ENCODE measurements at regions of chr14 and their contacts with region 1.

Region 1: DNA sequence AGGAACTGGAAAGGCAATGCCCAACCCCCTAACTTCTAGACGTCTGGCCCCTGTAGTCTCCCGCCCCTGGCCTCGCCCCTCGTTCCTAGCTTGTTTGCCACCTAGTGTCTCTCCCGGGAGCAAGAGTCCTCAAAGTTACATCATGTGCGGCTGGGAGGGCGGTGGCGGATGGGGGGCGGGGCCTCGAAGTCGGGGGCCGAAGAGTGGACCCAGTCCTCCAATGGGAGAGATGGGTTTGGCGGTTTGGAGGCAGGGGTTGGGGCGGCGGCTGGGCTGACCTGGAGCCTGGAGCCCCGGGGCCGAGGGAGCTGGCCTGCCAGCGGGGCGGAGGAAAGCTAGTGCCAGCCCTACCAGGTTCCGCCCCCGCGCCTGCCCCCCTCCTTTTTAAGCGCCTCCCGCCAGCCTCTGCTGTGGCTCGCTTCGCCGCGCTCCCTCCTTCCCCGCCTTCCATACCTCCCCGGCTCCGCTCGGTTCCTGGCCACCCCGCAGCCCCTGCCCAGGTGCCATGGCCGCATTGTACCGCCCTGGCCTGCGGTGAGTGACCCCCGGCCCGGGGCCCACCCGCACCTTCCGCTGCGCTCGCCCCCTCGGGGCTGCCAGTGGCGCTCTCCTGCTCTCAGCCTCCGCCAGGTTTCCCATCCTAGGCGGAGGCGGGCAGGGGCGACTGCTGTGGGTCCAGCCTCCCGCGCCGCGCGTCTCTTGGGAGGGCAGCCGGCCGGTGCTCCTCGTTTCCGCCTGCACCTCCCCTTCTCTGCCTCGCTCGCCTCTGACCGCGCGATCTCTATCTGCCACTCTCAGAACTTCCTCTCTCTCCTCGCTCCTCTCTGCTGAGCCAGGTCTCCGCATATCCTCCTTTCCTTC is at the start of gene PCK2:
- DNase-seq: peak; percentile 81
- ATAC-seq: peak; percentile 66
- H3K4me3 ChIP-seq: peak within 1 kb of the TSS; percentile 62 to 97 (median 89)
- H3K4me3 Mint-ChIP-seq: peak within 1 kb of the TSS; percentile 95
- H3K27ac ChIP-seq: peak within 1 kb of the TSS; percentile 80 to 95
- H3K27ac Mint-ChIP-seq: peak within 1 kb of the TSS; percentile 92
- H3K4me1 ChIP-seq: peaks cover 5 to 35% of the 10 kb centered on the region in 2 donors
- H3K4me1 Mint-ChIP-seq: peaks cover 38% of the 10 kb centered on the region
- H3K27me3 ChIP-seq: no peaks in the 10 kb centered on the region
- H3K27me3 Mint-ChIP-seq: no peaks in the 10 kb centered on the region
- CTCF ChIP-seq: peak; percentile 28
- total RNA-seq, gene PCK2: 34.1 and 40.4 TPM in 2 replicates

Region 2: DNA sequence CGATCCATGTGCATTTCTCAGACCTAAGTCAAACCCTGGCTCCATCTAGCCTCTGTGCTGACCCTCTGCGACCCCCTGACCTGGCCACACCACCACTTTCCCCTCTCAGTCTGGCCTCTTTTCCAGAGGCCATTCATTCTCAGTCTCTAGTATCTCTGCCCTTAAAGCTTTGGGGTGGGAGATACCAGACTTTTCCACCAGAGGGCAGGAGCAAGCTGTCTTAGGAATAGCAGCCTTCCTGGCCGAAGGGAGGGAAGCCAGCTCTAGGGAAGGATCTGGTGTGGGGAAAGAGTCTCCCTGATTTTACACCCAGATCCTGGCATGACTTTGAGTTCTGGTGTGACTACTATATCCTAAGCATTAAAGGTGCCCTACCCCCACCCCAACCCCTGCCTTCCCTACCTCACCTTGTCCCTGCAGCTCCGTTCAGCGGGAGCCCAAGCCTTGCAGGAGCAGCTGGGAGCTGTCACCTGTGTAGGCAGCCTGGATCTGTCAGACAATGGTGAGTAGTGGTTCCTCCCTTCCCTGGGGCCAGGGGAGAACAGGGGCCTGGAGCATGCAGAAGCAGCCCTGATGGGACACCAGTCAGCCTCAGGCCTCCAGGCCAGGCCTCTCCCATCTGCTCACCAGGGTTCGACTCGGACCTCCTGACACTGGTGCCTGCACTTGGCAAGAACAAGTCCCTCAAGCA is 35.7 kb before region 1 on chr14:
- CTCF ChIA-PET with region 1: interaction called, 198 read pairs
- POLR2A ChIA-PET with region 1: interaction called, 7 read pairs
- intact Hi-C with region 1: loop called (anchors 1 kb)
- DNase-seq: no peak
- ATAC-seq: peak; percentile 68
- H3K4me3 ChIP-seq: no peak overlapping the region
- H3K4me3 Mint-ChIP-seq: no peak overlapping the region
- H3K27ac ChIP-seq: no peak overlapping the region
- H3K27ac Mint-ChIP-seq: no peak overlapping the region
- H3K4me1 ChIP-seq: no peaks in the 10 kb centered on the region
- H3K4me1 Mint-ChIP-seq: peaks cover 1% of the 10 kb centered on the region
- H3K27me3 ChIP-seq: peaks cover 0 to 26% (median 5%) of the 10 kb centered on the region in 4 experiments
- H3K27me3 Mint-ChIP-seq: no peaks in the 10 kb centered on the region
- CTCF ChIP-seq: peak; percentile 75

Region 3: GRCh38 chr14:24135834-24136542 is 41.9 kb after region 1 on chr14 and contains the start of gene PSME1:
- CTCF ChIA-PET with region 1: interaction called, 3 read pairs
- POLR2A ChIA-PET with region 1: interaction called, 6 read pairs
- intact Hi-C with region 1: loop called (anchors 1 kb)
- DNase-seq: peak; percentile 96
- ATAC-seq: peak; percentile 97
- H3K4me3 ChIP-seq: peak within 1 kb of the TSS; percentile 54 to 96 (median 78)
- H3K4me3 Mint-ChIP-seq: peak within 1 kb of the TSS; percentile 92
- H3K27ac ChIP-seq: peak within 1 kb of the TSS; percentile 87 to 97
- H3K27ac Mint-ChIP-seq: peak within 1 kb of the TSS; percentile 94
- H3K4me1 ChIP-seq: peaks cover 33 to 43% of the 10 kb centered on the region in 2 donors
- H3K4me1 Mint-ChIP-seq: peaks cover 57% of the 10 kb centered on the region
- H3K27me3 ChIP-seq: no peaks in the 10 kb centered on the region
- H3K27me3 Mint-ChIP-seq: no peaks in the 10 kb centered on the region
- CTCF ChIP-seq: no peak
- total RNA-seq, gene PSME1: 227 and 237 TPM in 2 replicates